Heart right ventricle (tissue), 16 donors: ENCODE measurements at regions of chr21 and their contacts with region 1.

Region 1: DNA sequence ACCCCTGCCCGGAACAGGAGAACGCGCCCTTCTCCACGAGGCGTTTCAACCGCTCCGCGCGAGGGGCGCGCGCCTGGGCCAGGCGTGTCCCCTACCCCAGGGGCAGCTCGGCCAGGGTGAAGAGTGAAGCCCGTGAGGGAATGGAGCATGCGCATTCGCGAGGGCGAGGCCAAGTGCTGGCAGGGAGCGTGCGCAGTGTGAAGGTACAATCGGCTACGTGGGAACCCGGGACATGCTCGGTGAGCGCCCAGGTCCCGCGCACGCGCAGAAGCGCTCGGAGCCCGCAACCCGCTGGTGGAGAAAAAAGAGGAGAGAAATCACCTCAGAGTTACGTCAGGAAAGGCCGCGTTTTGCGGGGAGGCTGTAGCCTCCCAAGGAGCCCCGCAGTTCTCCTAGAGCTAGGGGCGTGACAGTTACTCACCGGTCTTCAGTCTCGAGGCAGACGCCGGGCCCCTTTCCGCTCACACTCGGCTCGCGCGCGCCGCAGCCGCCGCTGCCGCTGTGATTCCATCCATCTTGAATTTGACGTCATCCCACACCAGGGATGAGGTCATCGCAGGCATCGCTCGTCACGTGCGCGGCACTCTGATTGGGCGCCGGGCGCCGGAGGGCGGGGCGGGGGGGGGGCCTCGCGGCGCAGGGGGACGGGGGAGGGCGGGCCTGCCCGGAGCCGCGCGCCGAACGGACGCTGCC is at the start of gene ZBTB21:
- DNase-seq: peak; percentile 99
- ATAC-seq: peak; percentile 96 to 99 (median 98)
- H3K4me3 ChIP-seq: peak within 1 kb of the TSS; percentile 75 to 94 (median 83)
- H3K27ac ChIP-seq: peak within 1 kb of the TSS; percentile 92 to 99 (median 98)
- H3K4me1 ChIP-seq: peaks cover 5 to 28% (median 11%) of the 10 kb centered on the region in 9 donors
- H3K27me3 ChIP-seq: peaks cover 0 to 5% (median 0%) of the 10 kb centered on the region in 7 donors
- CTCF ChIP-seq: no peak
- total RNA-seq, gene ZBTB21: 3.8 to 15.2 (median 6.6) TPM

Region 2: DNA sequence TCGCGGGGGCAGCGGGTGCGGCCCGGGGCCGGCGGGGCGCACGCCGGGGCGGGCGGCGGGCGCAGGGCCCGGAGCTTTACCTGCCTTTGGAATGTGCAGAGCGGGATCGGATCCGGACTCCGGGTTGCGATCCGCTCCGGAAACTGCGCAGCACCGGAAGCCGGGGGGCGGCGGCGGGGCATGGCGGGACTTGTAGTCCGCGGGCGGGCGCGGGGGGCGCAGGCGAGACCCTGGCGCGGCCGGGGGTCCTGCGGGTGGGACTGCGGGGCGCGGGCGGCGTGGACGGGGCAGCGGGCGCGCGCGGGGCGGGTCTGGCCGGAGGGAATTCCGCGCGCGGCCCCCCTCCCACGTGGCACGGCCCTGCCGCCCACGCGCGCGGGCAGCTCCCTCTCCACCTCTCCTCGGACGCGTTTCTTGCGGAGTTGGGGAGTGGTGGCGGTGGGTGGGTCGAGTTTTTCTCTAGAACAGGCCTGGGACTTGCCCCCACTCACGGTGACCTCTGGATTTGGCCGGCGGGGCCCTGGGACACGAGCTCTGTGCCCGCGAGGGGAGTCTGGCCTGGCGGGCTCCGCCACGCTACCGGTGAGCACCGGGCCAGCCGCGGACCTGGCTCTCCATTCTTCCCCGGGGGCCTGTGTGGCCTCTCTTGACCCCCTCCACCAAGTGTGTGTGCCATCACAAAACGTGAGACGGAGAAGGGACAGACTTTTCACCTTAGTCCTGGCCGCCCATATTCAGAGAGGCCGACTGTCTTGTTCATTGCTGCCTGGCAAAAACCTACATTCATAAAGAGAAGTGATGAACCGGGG is 130.6 kb before region 1 on chr21 and contains the start of gene PRDM15:
- intact Hi-C with region 1: loop called in 2 of 10 experiments (anchors 5 kb)
- DNase-seq: peak; percentile 86
- ATAC-seq: peak; percentile 49 to 77 (median 64)
- H3K4me3 ChIP-seq: peak within 1 kb of the TSS; percentile 61 to 94 (median 78)
- H3K27ac ChIP-seq: peak within 1 kb of the TSS; percentile 65 to 94 (median 84)
- H3K4me1 ChIP-seq: peaks cover 0 to 20% (median 13%) of the 10 kb centered on the region in 9 donors
- H3K27me3 ChIP-seq: no peaks in the 10 kb centered on the region
- CTCF ChIP-seq: no peak
- total RNA-seq, gene PRDM15: 2.0 to 5.8 (median 3.2) TPM

Region 3: GRCh38 chr21:41926117-41926806 is 83.7 kb before region 1 on chr21:
- intact Hi-C with region 1: loop called in 1 of 10 experiments (anchors 5 kb)
- DNase-seq: no peak
- ATAC-seq: peak in 6 of 8 donors; percentile 66 to 82 (median 76)
- H3K4me3 ChIP-seq: peak overlapping the region in 9 of 10 donors; percentile 28 to 56 (median 47)
- H3K27ac ChIP-seq: peak overlapping the region; percentile 59 to 94 (median 84)
- H3K4me1 ChIP-seq: peaks cover 6 to 81% (median 56%) of the 10 kb centered on the region in 9 donors
- H3K27me3 ChIP-seq: no peaks in the 10 kb centered on the region
- CTCF ChIP-seq: no peak

Region 4: DNA sequence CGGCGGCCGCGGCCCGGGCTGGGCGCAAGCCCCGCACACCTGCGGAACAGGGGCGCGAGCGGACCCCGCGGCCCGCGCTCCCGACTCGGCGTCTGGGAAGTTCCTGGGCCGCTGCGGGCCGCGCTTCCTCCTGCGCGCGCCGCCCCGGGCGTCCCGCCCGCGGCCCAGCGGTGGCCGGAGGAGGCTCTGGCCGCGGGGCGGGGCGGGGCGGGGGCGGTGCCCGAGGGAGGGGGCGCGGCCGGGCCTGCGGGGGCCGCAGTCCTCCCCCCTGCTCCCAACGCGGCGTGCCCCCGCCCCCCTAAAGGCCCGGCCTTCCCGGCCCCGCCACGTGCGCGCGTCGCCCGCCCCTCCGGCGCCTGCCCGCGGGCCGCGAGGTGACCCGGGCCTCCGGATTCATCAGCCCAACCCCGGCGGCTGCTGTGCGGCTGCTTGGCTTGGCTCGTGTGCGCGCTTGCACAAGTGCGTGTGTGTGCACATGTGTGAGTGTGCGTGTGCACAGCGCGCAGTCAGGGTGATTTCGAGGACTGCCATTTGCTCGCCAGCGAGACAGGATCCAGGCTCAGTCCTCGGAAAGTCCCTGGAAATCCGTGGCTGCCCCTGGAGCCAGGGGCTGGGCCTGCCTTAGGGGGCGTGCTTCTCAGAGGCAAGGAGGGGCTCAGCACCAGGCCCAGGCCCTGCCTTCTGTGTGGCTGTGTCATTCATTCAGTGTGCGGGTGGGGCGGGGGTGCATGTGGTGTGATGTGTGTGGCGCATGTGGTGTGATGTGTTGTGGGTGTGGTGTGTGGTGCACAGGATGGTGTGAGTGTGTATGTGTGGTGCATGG is 55.9 kb before region 1 on chr21 and contains the start of gene C2CD2:
- intact Hi-C with region 1: loop called in 3 of 10 experiments (anchors 5 to 10 kb)
- DNase-seq: peak; percentile 69 to 82
- ATAC-seq: peak; percentile 64 to 89 (median 77)
- H3K4me3 ChIP-seq: peak within 1 kb of the TSS; percentile 12 to 91 (median 80)
- H3K27ac ChIP-seq: peak within 1 kb of the TSS; percentile 50 to 88 (median 79)
- H3K4me1 ChIP-seq: peaks cover 11 to 66% (median 41%) of the 10 kb centered on the region in 9 donors
- H3K27me3 ChIP-seq: peaks cover 0 to 9% (median 0%) of the 10 kb centered on the region in 7 donors
- CTCF ChIP-seq: peak in 2 of 9 donors; percentile 11 to 18
- total RNA-seq, gene C2CD2: 4.5 to 11.1 (median 6.9) TPM

Region 5: GRCh38 chr21:42107881-42108553 is 98.0 kb after region 1 on chr21:
- intact Hi-C with region 1: loop called in 6 of 10 experiments (anchors 5 to 10 kb)
- DNase-seq: peak; percentile 39 to 66
- ATAC-seq: peak; percentile 79 to 95 (median 91)
- H3K4me3 ChIP-seq: no peak overlapping the region
- H3K27ac ChIP-seq: no peak overlapping the region
- H3K4me1 ChIP-seq: peaks cover 0 to 15% (median 7%) of the 10 kb centered on the region in 9 donors
- H3K27me3 ChIP-seq: peaks cover 0 to 55% (median 7%) of the 10 kb centered on the region in 7 donors
- CTCF ChIP-seq: peak in 8 of 9 donors; percentile 52 to 82 (median 66)